Activated B cell treated with CpG ODN at 0.5 μM for 24 hours (primary cell): ENCODE measurements at regions of chr3 and their contacts with region 1.

Region 1: GRCh38 chr3:14921078-14921616 is 26.2 kb upstream of the NR2C2 start:
- DNase-seq: peak; percentile 72
- ATAC-seq: peak; percentile 98
- H3K4me3 Mint-ChIP-seq: no peak overlapping the region
- H3K27ac Mint-ChIP-seq: no peak overlapping the region
- H3K4me1 Mint-ChIP-seq: no peaks in the 10 kb centered on the region
- H3K27me3 Mint-ChIP-seq: peaks cover 5% of the 10 kb centered on the region
- CTCF ChIP-seq: peak; percentile 40

Region 2: DNA sequence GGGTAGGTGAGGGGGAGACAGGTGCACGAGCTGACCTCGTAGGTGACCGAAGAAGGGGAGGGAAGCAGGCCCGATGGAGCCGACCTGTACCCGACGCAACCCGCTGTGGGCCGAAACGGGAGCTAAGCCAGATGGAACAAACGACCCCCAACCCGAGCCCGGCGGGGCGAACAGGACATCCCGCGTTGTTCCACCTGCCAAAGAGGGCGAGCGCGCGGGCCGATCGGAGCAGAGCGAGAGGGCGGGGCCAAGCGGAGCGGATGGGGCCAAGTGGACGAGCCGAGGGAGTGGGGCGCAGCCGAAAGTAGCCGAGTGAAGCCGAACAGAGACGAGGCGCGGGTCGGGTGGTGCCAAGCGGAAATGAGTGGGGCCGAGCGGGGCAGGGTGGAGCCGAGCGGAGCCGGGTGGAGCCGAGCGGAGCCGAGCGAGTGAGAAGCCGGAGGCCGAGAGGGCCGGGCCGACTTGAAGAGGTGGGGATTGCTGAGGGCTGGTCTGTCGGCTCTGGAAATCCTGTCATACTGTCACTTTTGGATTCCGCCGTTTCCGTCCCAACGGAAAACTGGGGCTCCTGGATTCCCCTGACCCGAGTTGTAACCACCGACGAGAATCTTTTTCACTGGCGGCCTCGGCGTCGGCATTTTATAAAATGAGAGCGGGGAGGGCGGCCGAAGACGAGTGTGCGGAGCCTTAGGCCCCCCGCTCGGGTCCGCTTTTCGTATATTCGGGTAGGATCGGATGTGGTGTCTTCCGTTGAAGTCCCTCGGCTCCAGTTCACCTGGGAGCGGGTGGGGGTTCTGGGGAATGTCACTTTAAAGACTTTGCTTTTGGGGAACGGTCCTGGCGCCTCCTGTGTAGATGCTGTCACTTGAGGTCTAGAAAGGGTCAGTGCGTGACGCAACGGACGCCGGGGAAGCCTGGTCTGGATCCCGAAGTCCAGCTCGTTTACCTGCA is 1025.7 kb before region 1 on chr3:
- CTCF ChIA-PET with region 1: interaction called, 4 read pairs
- POLR2A ChIA-PET with region 1: no interaction called
- intact Hi-C with region 1: loop called (anchors 1 kb)
- DNase-seq: peak; percentile 86
- ATAC-seq: peak; percentile 99
- H3K4me3 Mint-ChIP-seq: peak overlapping the region; percentile 89
- H3K27ac Mint-ChIP-seq: peak overlapping the region; percentile 78
- H3K4me1 Mint-ChIP-seq: peaks cover 41% of the 10 kb centered on the region
- H3K27me3 Mint-ChIP-seq: peaks cover 5% of the 10 kb centered on the region
- CTCF ChIP-seq: no peak

Region 3: DNA sequence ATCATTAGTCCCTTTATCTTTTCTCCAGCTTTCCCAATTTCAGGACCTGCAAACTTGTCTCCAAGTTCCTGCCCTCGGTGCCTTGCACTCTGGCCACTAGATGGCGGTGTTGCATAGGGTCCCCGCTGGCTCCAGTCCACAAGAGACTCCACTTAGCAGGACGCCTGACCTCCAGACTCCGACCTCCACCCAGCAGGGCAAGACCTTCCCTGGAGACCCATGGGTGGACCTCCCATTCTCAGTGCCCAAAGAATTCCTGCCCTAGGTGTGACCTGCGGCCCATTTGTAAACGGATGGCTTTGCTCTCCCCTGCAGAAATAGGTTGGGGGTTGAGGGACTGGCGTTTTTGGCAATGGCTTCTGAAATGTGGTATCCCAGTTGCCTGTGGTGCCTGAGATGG is 659.9 kb before region 1 on chr3:
- CTCF ChIA-PET with region 1: interaction called, 9 read pairs
- POLR2A ChIA-PET with region 1: no interaction called
- intact Hi-C with region 1: loop called (anchors 1 kb)
- DNase-seq: peak; percentile 67
- ATAC-seq: peak; percentile 58
- H3K4me3 Mint-ChIP-seq: no peak overlapping the region
- H3K27ac Mint-ChIP-seq: no peak overlapping the region
- H3K4me1 Mint-ChIP-seq: no peaks in the 10 kb centered on the region
- H3K27me3 Mint-ChIP-seq: peaks cover 10% of the 10 kb centered on the region
- CTCF ChIP-seq: peak; percentile 68

Region 4: DNA sequence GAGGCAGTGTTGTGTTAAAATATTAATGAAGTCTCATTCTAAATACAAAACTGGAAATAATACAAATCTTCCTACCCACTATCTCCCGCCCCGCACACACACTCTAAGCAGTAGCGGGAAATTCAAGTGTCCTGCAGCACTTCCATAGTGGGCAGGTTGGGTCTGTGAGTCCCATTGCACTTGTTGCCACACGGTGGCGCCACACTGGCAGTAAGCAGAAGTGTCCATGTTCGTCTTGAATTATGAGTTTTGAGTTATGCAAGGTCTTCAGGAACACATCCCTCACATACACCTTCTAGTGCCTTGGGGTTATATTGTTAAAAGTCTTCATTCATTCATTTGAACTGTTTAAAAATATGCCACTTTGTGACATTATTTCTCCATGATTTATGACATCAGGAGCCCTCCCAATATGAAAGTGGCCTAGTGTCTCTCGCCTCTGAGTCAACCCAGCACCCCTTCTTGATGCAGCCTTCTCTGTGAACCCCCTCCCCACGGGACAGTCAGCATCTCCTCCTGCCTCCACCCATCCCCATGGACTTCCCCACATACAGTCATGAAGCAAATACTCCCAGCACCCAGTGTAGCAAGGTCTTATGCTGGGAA is 287.2 kb before region 1 on chr3:
- CTCF ChIA-PET with region 1: interaction called, 12 read pairs
- POLR2A ChIA-PET with region 1: no interaction called
- intact Hi-C with region 1: loop called (anchors 1 kb)
- DNase-seq: no peak
- ATAC-seq: peak; percentile 56
- H3K4me3 Mint-ChIP-seq: no peak overlapping the region
- H3K27ac Mint-ChIP-seq: no peak overlapping the region
- H3K4me1 Mint-ChIP-seq: no peaks in the 10 kb centered on the region
- H3K27me3 Mint-ChIP-seq: peaks cover 59% of the 10 kb centered on the region
- CTCF ChIP-seq: peak; percentile 28

Region 5: GRCh38 chr3:14678015-14678503 is 243.1 kb before region 1 on chr3:
- CTCF ChIA-PET with region 1: interaction called, 16 read pairs
- POLR2A ChIA-PET with region 1: no interaction called
- intact Hi-C with region 1: loop called (anchors 1 kb)
- DNase-seq: no peak
- ATAC-seq: no peak
- H3K4me3 Mint-ChIP-seq: no peak overlapping the region
- H3K27ac Mint-ChIP-seq: no peak overlapping the region
- H3K4me1 Mint-ChIP-seq: no peaks in the 10 kb centered on the region
- H3K27me3 Mint-ChIP-seq: no peaks in the 10 kb centered on the region
- CTCF ChIP-seq: no peak

Region 6: GRCh38 chr3:15051531-15051930 is 130.4 kb after region 1 on chr3:
- CTCF ChIA-PET with region 1: interaction called, 5 read pairs
- POLR2A ChIA-PET with region 1: no interaction called
- intact Hi-C with region 1: loop called (anchors 5 kb)
- DNase-seq: no peak
- ATAC-seq: peak; percentile 20
- H3K4me3 Mint-ChIP-seq: no peak overlapping the region
- H3K27ac Mint-ChIP-seq: peak overlapping the region; percentile 84
- H3K4me1 Mint-ChIP-seq: peaks cover 68% of the 10 kb centered on the region
- H3K27me3 Mint-ChIP-seq: no peaks in the 10 kb centered on the region
- CTCF ChIP-seq: no peak